ENCODE measurements at regions of chr14 and their contacts with region 1.

Region 1: DNA sequence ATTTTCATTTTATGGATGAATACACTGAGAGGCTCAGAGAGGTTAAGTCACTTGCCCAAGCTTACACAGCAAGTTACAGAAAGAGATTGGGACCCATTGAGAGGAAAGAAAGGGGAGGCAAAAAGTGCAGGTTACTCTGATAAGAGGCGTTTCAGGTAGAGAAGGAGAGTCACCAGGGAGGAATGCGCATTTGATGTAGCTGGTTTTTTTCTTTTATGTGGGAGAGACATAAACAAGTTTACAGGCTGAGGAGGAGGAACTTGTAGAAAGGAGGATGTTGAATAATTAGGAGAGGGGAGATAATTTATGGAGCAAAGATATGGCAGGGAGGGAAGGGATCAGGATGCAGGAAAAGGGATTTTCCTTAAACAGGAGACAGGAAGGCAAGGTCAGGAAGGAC is 297.0 kb downstream of the PCNX1 start:
- DNase-seq: no peak
- H3K4me3 ChIP-seq: no peak overlapping the region
- H3K27ac ChIP-seq: no peak overlapping the region
- H3K4me1 ChIP-seq: no peaks in the 10 kb centered on the region
- H3K27me3 ChIP-seq: no peaks in the 10 kb centered on the region
- CTCF ChIP-seq: no peak
- EP300 ChIP-seq: no peak
- POLR2A ChIP-seq: no peak

Region 2: GRCh38 chr14:70707138-70708038 is 496.8 kb before region 1 on chr14:
- in situ Hi-C with region 1: no loop called
- intact Hi-C with region 1: no loop called
- DNase-seq: no peak
- H3K4me3 ChIP-seq: no peak overlapping the region
- H3K27ac ChIP-seq: no peak overlapping the region
- H3K4me1 ChIP-seq: no peaks in the 10 kb centered on the region
- H3K27me3 ChIP-seq: no peaks in the 10 kb centered on the region
- CTCF ChIP-seq: no peak
- EP300 ChIP-seq: no peak
- POLR2A ChIP-seq: no peak

Region 3: GRCh38 chr14:71163842-71164629 is 40.2 kb before region 1 on chr14:
- in situ Hi-C with region 1: no loop called
- intact Hi-C with region 1: loop called (anchors 1 kb)
- DNase-seq: no peak
- H3K4me3 ChIP-seq: no peak overlapping the region
- H3K27ac ChIP-seq: peak overlapping the region; percentile 68 to 76 (median 70)
- H3K4me1 ChIP-seq: peaks cover 7 to 38% (median 20%) of the 10 kb centered on the region in 4 donors
- H3K27me3 ChIP-seq: no peaks in the 10 kb centered on the region
- CTCF ChIP-seq: no peak
- EP300 ChIP-seq: no peak
- POLR2A ChIP-seq: no peak

Region 4: GRCh38 chr14:71610149-71610548 is 405.9 kb after region 1 on chr14:
- in situ Hi-C with region 1: no loop called
- intact Hi-C with region 1: no loop called
- DNase-seq: no peak
- H3K4me3 ChIP-seq: no peak overlapping the region
- H3K27ac ChIP-seq: no peak overlapping the region
- H3K4me1 ChIP-seq: peaks cover 0 to 9% (median 2%) of the 10 kb centered on the region in 4 donors
- H3K27me3 ChIP-seq: no peaks in the 10 kb centered on the region
- CTCF ChIP-seq: no peak
- EP300 ChIP-seq: no peak
- POLR2A ChIP-seq: no peak